Naive thymus-derived CD4-positive, alpha-beta T cell (primary cell): ENCODE measurements at regions of chr7 and their contacts with region 1.

Region 1: GRCh38 chr7:150876817-150877526 is 24.7 kb downstream of the AOC1 start:
- DNase-seq: peak in 8 of 9 donors; percentile 24 to 68 (median 51)
- ATAC-seq: peak; percentile 73
- H3K4me3 ChIP-seq: no peak overlapping the region
- H3K4me3 Mint-ChIP-seq: peak overlapping the region in 8 of 10 donors; percentile 45 to 68 (median 56)
- H3K27ac ChIP-seq: no peak overlapping the region
- H3K27ac Mint-ChIP-seq: peak overlapping the region in 8 of 9 donors; percentile 35 to 91 (median 75)
- H3K4me1 ChIP-seq: peaks cover 7 to 11% of the 10 kb centered on the region in 2 donors
- H3K4me1 Mint-ChIP-seq: peaks cover 3 to 32% (median 29%) of the 10 kb centered on the region in 7 donors
- H3K27me3 ChIP-seq: no peaks in the 10 kb centered on the region
- H3K27me3 Mint-ChIP-seq: peaks cover 0 to 63% (median 0%) of the 10 kb centered on the region in 5 donors

Region 2: DNA sequence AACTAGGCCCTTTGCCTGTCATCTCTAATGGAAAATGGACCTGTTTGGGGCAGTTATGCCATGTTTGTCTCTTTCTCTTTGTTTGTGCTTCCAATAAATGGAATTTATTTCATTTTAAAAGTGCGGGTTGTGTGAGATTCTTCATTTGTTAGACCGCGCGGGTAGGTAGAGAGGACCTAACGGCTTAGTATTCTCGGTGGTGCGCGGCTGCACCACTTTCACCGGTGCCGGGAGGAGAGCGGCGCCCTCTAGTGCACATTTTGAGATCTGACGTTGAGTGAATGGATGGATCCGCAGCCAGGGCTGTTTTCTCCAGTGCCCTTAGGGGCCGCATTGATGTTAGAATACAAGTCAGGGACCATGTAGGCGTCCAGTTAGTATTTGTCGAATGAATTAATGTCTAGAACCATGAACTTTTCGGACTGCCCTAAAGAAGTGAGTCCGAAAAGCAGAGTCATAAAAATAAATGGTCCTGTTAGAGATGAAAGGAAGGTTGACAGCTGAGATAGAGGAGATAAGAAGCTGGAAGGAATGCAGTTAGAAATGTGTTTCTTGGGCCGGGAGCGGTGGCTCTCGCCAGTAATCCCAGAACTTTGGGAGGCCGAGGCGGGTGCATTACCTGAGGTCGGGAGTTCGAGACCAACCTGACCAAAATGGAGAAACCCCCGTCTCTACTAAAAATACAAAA is 455.8 kb before region 1 on chr7:
- CTCF ChIA-PET with region 1: no interaction called
- POLR2A ChIA-PET with region 1: no interaction called
- intact Hi-C with region 1: loop called in 1 of 2 experiments (anchors 5 kb)
- DNase-seq: peak; percentile 65 to 87 (median 81)
- ATAC-seq: peak; percentile 99
- H3K4me3 ChIP-seq: no peak overlapping the region
- H3K4me3 Mint-ChIP-seq: peak overlapping the region; percentile 16 to 75 (median 52)
- H3K27ac ChIP-seq: no peak overlapping the region
- H3K27ac Mint-ChIP-seq: peak overlapping the region in 7 of 9 donors; percentile 18 to 78 (median 45)
- H3K4me1 ChIP-seq: peaks cover 3 to 4% of the 10 kb centered on the region in 2 donors
- H3K4me1 Mint-ChIP-seq: peaks cover 5 to 17% (median 8%) of the 10 kb centered on the region in 7 donors
- H3K27me3 ChIP-seq: no peaks in the 10 kb centered on the region
- H3K27me3 Mint-ChIP-seq: peaks cover 0 to 6% (median 0%) of the 10 kb centered on the region in 5 donors

Region 3: DNA sequence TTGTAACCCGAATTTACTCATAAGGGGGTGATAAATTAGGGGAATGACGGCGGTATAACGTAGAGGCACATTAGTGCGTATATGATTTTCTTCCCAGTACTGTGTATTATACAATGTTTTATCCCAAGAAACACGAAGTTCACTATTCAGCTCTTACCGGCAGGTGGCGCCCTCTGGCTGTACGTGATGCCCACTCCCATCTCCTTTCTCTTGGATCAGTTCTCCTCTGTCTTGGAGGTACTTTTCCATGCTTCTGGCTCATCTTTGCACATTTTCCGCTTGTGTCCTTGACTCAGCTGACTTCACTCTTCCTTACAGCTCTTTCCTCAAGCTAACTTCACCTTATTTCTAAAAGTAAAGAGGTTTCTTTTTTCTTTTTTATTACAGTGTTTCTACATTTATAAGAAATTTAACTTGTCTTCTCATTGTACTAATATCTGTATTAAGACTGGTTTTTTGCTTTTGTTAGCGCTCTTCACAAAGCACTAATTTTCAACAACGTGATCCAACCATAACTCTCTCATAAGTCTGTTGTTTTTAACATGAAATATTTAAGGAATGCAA is 98.2 kb before region 1 on chr7:
- CTCF ChIA-PET with region 1: interaction called, 5 read pairs
- POLR2A ChIA-PET with region 1: no interaction called
- intact Hi-C with region 1: loop called in 1 of 2 experiments (anchors 1 kb)
- DNase-seq: peak; percentile 31 to 76 (median 60)
- ATAC-seq: peak; percentile 88
- H3K4me3 ChIP-seq: no peak overlapping the region
- H3K4me3 Mint-ChIP-seq: no peak overlapping the region
- H3K27ac ChIP-seq: no peak overlapping the region
- H3K27ac Mint-ChIP-seq: no peak overlapping the region
- H3K4me1 ChIP-seq: no peaks in the 10 kb centered on the region
- H3K4me1 Mint-ChIP-seq: peaks cover 0 to 8% (median 4%) of the 10 kb centered on the region in 7 donors
- H3K27me3 ChIP-seq: no peaks in the 10 kb centered on the region
- H3K27me3 Mint-ChIP-seq: peaks cover 0 to 42% (median 0%) of the 10 kb centered on the region in 5 donors